ENCODE measurements at regions of chr1 and their contacts with region 1.

Region 1: GRCh38 chr1:56584910-56585528 is 5.7 kb upstream of the PLPP3 start:
- DNase-seq: peak in 16 of 42 donors; percentile 15 to 78 (median 48)

Region 2: GRCh38 chr1:55284852-55285251 is 1300.2 kb before region 1 on chr1:
- intact Hi-C with region 1: loop called (anchors 5 kb)
- DNase-seq: peak in 26 of 42 donors; percentile 15 to 76 (median 46)

Region 3: GRCh38 chr1:55375617-55376258 is 1209.3 kb before region 1 on chr1:
- intact Hi-C with region 1: loop called (anchors 10 kb)
- DNase-seq: peak in 39 of 42 donors; percentile 6 to 88 (median 64)

Region 4: DNA sequence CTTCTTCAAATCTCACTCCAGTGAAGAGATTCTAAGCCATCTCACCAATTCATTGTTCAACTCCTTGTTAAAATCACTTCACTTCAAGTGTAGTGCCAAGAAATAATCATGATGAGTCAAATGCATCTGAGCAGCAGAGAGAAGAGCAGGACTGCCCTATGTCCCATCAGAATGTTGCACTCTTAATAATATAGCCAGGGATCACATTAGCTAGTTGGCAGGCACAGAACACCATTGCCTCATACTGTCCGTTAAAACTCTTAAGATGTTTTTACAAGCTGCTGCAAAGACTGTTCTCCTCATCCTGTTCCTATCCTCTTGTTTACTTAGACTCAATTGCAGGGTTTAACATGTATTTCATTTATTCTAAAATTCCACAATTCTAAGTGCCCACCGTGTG is 438.6 kb before region 1 on chr1:
- intact Hi-C with region 1: no loop called
- DNase-seq: no peak

Region 5: DNA sequence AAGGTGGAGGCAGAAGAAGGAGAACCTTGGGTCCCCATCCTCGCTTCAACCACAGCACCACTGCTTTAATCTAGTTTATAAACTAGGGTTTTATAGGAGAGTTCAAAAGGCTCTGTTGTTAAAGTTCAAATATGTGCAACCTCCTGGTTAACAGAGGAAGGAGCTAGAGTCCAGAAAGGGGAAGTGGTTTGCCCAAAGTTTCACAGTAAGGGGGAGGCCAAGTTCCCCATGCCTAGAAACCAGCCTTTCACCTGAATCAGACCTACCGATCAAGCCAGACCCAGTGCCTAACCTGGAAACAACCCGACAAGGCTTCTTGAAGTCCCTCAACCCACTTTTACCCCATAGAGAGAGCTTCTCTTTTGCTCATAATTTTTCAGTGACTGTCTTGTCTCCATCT is 112.2 kb before region 1 on chr1:
- intact Hi-C with region 1: no loop called
- DNase-seq: no peak

Measured in head of caudate nucleus (tissue), 42 donors.